Activated T-helper 1 cell treated with anti-CD3 and anti-CD28 coated beads, Interleukin-12 subunit alpha, Interleukin-12 subunit beta, Interleukin-2, Interleukin-4 antibody, amounts not matched to agents 30 ng/mL and 10 ng/mL and 1 ng/mL, durations not matched to agents 14 hours and 24 hours and 36 hours (primary cell): ENCODE measurements at regions of chr18 and their contacts with region 1.

Region 1: DNA sequence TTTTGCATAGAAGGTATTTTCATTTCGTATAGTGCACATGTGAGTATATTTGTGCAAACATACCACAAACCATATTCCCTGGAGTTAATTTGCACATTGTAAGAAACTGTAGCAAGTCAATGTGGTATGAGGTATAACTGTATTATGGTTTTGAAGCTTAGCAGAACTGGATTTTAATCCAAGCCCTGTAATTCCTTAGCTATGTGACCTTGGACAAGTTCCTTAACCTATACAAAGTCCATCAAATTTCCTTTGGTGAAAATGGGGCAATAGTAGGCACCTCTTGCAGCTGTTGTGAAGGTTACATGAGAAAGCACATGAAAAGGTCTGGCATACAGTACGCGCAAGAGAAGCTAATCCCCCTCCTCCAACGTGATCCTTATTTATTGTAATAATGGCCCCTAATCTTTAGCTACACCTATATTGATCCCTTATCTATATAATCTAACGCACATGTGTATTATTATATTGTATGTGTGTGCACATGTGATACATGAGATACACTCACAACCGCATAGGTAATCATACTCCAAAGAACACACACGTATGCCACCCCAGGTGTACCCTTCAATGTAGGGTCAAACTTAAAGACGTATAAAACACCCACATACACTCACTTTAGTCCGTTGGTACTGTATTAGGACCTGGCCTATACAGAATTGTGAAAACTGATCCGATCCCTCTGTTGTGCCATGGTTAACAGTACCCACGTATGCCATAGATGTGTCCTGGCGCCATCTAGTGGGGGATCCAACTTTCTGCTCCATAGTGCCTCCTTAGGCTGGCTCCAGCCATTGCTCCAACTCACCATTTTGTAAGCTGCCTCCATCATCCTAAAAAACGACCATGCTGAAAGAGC is 402.9 kb upstream of the SLC14A2 start:
- DNase-seq: peak; percentile 62
- H3K4me3 Mint-ChIP-seq: no peak overlapping the region
- H3K27ac Mint-ChIP-seq: no peak overlapping the region
- H3K4me1 Mint-ChIP-seq: no peaks in the 10 kb centered on the region
- H3K27me3 Mint-ChIP-seq: peaks cover 7% of the 10 kb centered on the region

Region 2: GRCh38 chr18:43620936-43621335 is 1591.5 kb before region 1 on chr18:
- intact Hi-C with region 1: loop called (anchors 1 kb)
- DNase-seq: no peak
- H3K4me3 Mint-ChIP-seq: no peak overlapping the region
- H3K27ac Mint-ChIP-seq: no peak overlapping the region
- H3K4me1 Mint-ChIP-seq: no peaks in the 10 kb centered on the region
- H3K27me3 Mint-ChIP-seq: no peaks in the 10 kb centered on the region

Region 3: GRCh38 chr18:44358402-44358801 is 854.0 kb before region 1 on chr18:
- intact Hi-C with region 1: loop called (anchors 5 kb)
- DNase-seq: no peak
- H3K4me3 Mint-ChIP-seq: no peak overlapping the region
- H3K27ac Mint-ChIP-seq: no peak overlapping the region
- H3K4me1 Mint-ChIP-seq: no peaks in the 10 kb centered on the region
- H3K27me3 Mint-ChIP-seq: no peaks in the 10 kb centered on the region

Region 4: DNA sequence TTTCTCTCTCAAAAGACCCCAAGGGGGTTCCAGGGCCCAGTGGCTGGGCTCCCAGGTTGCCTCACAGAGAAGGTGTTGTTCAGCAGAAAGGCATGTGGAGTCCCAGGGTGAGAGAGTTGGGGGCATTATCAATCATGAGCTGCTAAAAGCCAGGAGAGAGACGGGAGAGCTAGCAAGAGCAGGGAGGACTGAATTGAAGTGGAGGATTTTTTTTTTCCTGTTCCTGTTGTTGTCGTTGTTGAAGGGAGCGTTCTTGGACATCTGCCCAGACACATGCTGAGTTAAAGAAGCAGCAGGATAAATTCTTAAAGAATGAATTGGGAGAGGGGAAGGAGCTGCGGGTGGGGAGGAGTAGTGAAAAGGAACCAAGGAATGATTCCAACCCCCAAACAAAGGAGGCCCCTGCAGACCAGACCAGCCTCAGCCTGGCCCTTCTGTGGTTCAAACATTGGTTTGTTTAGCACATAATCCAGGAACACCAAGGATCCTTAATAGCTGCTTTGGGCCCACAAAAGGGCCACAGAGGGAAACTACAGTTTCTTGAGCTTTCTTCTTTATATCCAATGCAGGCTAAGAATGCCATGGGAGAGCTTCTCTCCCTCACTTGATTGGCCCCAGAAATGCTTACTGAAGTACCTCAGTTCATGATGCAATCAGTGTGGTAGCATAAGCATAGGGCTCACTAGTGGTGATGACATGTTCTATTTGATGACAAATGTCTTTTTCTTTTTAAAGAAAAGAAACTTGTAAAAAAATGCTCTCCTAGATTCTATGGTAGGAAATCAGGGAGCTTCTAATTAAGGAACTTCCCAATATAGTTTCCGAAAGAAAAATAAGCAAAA is 385.8 kb before region 1 on chr18:
- intact Hi-C with region 1: loop called (anchors 10 kb)
- DNase-seq: no peak
- H3K4me3 Mint-ChIP-seq: no peak overlapping the region
- H3K27ac Mint-ChIP-seq: no peak overlapping the region
- H3K4me1 Mint-ChIP-seq: peaks cover 25% of the 10 kb centered on the region
- H3K27me3 Mint-ChIP-seq: peaks cover 4% of the 10 kb centered on the region

Region 5: DNA sequence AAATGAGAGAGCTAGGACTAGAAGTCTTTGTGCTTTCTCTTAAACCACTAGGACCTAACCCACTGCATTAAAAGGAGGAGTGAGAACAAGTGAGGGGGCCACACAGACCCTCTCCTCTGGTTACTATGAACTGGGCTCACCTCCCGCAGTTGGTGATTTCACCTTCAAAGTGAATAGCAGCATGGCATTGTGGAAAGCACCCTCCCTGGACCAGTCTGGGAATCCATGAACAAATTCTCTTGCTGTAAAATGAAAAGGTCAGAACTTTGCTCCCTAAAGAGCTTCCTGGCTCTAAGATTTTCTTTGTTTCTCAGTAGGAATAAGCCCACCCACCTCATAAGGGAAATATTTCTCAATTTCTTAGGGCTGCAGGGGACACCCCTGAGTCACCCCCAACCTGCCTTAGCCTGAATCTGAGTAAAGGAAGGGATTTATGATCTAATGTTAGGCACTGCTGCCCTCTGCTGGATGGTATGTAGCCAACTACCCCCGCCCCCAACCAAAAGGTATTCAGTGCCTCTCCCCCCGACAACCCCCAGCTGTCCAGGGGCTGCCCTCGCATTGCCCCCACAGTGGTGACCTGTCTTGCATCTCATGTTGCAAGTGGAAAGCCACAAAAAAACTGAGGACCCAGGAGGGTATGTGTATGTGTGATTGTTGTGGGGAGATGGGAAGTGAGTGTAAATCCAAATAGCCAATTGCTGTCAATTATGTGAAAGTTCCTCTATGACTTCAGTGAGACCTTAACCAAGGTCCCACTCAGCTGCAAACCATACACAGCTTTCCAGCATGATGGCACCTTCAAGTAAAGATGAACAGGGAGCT is 171.9 kb after region 1 on chr18:
- intact Hi-C with region 1: loop called (anchors 2 kb)
- DNase-seq: peak; percentile 5
- H3K4me3 Mint-ChIP-seq: no peak overlapping the region
- H3K27ac Mint-ChIP-seq: no peak overlapping the region
- H3K4me1 Mint-ChIP-seq: no peaks in the 10 kb centered on the region
- H3K27me3 Mint-ChIP-seq: peaks cover 3% of the 10 kb centered on the region